Activated CD4-positive, alpha-beta T cell treated with anti-CD3 and anti-CD28 coated beads, Interleukin-2, amount 10 ng/mL, durations not matched to agents 24 days and 14 days (primary cell): ENCODE measurements at regions of chr1 and their contacts with region 1.

Region 1: DNA sequence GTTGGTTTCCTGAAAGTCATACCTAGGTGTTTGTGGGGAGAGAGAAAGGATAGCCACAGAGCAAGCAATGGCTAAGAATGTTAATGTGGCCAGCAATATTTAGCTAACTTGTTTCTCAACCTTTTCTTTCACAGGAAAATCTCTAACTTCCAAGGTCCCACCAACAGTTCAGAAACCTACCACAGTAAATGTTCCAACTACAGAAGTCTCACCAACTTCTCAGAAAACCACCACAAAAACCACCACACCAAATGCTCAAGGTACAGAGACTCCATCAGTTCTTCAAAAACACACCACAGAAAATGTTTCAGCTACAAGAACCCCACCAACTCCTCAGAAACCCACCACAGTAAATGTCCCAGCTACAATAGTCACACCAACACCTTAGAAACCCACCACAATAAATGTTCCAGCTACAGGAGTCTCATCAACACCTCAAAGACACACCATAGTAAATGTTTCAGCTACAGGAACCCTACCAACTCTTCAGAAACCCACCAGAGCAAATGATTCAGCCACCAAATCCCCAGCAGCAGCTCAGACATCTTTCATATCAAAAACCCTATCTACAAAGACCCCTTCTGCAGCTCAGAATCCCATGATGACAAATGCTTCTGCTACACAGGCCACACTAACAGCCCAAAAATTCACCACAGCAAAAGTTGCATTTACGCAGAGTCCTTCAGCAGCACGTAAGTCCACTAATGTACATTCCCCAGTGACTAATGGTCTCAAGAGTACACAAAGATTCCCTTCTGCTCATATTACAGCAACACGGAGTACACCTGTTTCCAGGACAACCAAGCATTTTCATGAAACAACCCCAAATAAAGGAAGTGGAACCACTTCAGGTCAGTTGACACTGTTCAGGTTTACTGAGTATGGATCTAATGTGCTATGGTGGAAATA is 15.3 kb downstream of the CD55 start:
- DNase-seq: peak; percentile 90
- H3K4me3 Mint-ChIP-seq: peak overlapping the region; percentile 71
- H3K27ac Mint-ChIP-seq: peak overlapping the region; percentile 95
- H3K4me1 Mint-ChIP-seq: peaks cover 65% of the 10 kb centered on the region
- H3K27me3 Mint-ChIP-seq: no peaks in the 10 kb centered on the region

Region 2: DNA sequence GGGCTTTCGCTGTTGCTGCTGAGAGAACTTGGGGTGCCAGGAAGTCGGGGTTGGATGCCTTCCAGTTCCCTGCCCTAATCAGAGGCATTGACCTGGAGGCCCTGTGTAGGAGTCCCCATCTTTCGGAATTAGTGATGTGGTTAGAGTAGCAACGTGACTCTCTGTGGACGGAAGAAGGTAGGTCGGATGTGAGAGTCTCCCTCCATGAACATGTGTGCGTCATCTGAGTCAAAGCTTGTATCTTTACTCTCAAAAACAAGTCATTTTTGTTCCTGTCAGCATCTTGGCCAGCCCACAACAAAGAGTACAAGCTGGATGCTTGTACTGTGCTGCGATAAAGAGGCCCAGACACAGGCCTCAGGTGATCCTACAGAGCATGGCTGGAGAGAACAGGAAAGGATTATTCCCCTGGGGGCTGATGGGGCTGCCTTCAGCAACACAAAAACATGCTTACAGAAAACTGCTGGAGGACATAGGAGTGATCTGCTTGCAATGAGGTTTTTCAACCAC is 533.5 kb before region 1 on chr1:
- intact Hi-C with region 1: loop called (anchors 1 kb)
- DNase-seq: peak; percentile 94
- H3K4me3 Mint-ChIP-seq: peak overlapping the region; percentile 55
- H3K27ac Mint-ChIP-seq: peak overlapping the region; percentile 87
- H3K4me1 Mint-ChIP-seq: peaks cover 77% of the 10 kb centered on the region
- H3K27me3 Mint-ChIP-seq: peaks cover 29% of the 10 kb centered on the region

Region 3: DNA sequence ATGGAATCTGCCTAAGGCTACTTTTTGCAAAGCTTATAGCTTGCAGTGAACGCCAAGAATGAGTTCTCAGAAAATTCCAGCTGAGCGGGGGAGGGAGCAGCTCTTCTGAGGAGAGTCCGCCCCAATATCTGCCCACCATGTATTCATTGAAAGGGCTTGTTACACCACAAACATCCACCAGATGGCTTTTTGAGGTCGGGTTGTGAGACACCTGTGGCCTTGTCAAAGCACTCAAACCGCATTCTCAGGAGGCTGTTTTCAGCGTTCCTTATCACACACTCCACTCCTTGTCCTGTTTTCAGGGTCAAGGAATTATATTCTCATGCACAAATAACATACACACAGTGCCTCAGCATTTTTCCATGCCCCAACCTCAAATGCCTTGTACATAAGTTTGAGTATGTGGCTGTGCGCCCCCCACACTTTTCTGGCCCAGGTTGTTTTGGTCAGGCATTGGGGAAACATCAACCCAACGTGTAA is 252.1 kb before region 1 on chr1:
- intact Hi-C with region 1: loop called (anchors 2 kb)
- DNase-seq: peak; percentile 89
- H3K4me3 Mint-ChIP-seq: no peak overlapping the region
- H3K27ac Mint-ChIP-seq: no peak overlapping the region
- H3K4me1 Mint-ChIP-seq: peaks cover 30% of the 10 kb centered on the region
- H3K27me3 Mint-ChIP-seq: peaks cover 24% of the 10 kb centered on the region

Region 4: DNA sequence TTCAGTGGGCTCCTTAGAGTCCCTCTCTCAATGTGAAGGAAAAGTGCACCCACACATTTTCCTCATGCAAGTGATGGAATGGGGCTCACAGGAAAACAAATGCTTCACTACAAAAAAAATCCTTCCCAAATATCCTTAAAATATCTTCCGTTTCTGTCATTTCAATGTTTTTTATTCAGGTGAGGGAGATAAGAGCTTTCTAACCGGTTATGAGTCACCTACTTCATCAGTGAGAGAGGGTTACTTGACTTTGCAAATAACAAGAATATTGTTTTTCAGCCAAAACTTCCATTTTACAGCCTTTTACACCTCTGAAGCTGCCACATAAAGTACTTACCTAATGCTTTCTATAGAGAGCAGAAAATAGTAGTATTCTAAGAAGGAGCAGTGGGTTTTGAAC is 113.7 kb before region 1 on chr1:
- intact Hi-C with region 1: no loop called
- DNase-seq: no peak
- H3K4me3 Mint-ChIP-seq: no peak overlapping the region
- H3K27ac Mint-ChIP-seq: no peak overlapping the region
- H3K4me1 Mint-ChIP-seq: peaks cover 3% of the 10 kb centered on the region
- H3K27me3 Mint-ChIP-seq: peaks cover 9% of the 10 kb centered on the region

Region 5: GRCh38 chr1:207241164-207241934 is 95.5 kb before region 1 on chr1:
- intact Hi-C with region 1: no loop called
- DNase-seq: no peak
- H3K4me3 Mint-ChIP-seq: no peak overlapping the region
- H3K27ac Mint-ChIP-seq: no peak overlapping the region
- H3K4me1 Mint-ChIP-seq: no peaks in the 10 kb centered on the region
- H3K27me3 Mint-ChIP-seq: peaks cover 19% of the 10 kb centered on the region

Region 6: GRCh38 chr1:207261971-207262370 is 74.8 kb before region 1 on chr1:
- intact Hi-C with region 1: no loop called
- DNase-seq: no peak
- H3K4me3 Mint-ChIP-seq: no peak overlapping the region
- H3K27ac Mint-ChIP-seq: no peak overlapping the region
- H3K4me1 Mint-ChIP-seq: no peaks in the 10 kb centered on the region
- H3K27me3 Mint-ChIP-seq: peaks cover 3% of the 10 kb centered on the region

Region 7: DNA sequence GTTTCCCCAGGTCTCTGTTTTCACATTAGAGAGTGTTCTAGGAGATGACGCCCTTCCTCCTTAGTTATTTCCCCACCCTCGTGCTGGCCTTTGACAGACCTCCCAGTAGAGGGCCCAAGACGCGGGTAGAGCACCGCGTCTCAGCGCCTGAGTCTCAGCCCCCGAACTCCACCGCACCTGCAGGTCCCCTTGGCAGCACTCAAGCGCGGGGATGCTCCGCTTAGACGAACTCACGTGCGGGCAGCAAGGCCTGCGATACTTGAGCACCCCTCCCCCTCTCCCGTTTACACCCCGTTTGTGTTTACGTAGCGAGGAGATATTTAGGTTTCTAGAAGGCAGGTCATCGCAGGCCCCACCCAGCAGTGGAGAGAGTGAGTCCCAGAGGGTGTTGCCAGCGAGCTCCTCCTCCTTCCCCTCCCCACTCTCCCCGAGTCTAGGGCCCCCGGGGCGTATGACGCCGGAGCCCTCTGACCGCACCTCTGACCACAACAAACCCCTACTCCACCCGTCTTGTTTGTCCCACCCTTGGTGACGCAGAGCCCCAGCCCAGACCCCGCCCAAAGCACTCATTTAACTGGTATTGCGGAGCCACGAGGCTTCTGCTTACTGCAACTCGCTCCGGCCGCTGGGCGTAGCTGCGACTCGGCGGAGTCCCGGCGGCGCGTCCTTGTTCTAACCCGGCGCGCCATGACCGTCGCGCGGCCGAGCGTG is 15.6 kb before region 1 on chr1 and contains the start of gene CD55:
- intact Hi-C with region 1: loop called (anchors 1 kb)
- DNase-seq: peak; percentile 100
- H3K4me3 Mint-ChIP-seq: peak within 1 kb of the TSS; percentile 98
- H3K27ac Mint-ChIP-seq: peak within 1 kb of the TSS; percentile 100
- H3K4me1 Mint-ChIP-seq: peaks cover 35% of the 10 kb centered on the region
- H3K27me3 Mint-ChIP-seq: peaks cover 3% of the 10 kb centered on the region
- total RNA-seq, gene CD55: 133 and 142 TPM in 2 replicates

Region 8: GRCh38 chr1:207389740-207390464 is 53.1 kb after region 1 on chr1:
- intact Hi-C with region 1: loop called (anchors 1 kb)
- DNase-seq: no peak
- H3K4me3 Mint-ChIP-seq: no peak overlapping the region
- H3K27ac Mint-ChIP-seq: peak overlapping the region; percentile 82
- H3K4me1 Mint-ChIP-seq: peaks cover 8% of the 10 kb centered on the region
- H3K27me3 Mint-ChIP-seq: no peaks in the 10 kb centered on the region

Region 9: GRCh38 chr1:207414606-207415108 is 77.8 kb after region 1 on chr1:
- intact Hi-C with region 1: loop called (anchors 1 kb)
- DNase-seq: peak; percentile 69
- H3K4me3 Mint-ChIP-seq: peak overlapping the region; percentile 12
- H3K27ac Mint-ChIP-seq: peak overlapping the region; percentile 45
- H3K4me1 Mint-ChIP-seq: peaks cover 26% of the 10 kb centered on the region
- H3K27me3 Mint-ChIP-seq: peaks cover 9% of the 10 kb centered on the region

Region 10: DNA sequence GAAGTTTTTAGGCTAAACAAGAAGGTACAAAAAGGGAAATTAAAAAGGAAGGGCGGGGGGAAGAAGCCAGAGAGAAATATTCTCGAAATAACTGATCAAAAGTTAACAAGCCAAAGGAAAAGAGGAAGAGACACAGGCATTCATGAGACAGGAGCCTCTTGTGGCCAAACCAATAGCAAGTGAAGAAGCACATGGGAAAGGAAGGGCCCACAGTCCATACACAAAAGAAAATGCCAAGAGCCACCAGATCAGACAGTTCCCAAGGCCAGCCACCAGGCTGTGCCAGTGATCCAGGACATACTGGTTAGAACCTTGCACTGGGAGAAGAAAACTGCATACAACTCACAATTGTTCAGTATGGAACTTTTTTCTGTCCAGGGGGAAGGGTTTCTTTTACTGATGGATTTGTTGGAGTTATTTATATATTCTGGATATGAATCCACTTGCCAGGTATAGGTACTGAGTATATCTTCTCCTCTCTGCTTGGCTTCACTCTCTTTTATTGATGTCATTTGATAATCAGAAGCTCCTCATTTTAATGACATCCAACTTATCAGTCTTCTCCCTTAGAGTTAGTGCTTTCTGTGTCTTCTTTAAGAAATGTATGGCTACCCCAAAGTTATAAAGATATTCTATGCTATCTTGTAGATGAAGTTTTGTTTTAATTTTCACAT is 491.8 kb after region 1 on chr1:
- intact Hi-C with region 1: loop called (anchors 1 kb)
- DNase-seq: peak; percentile 87
- H3K4me3 Mint-ChIP-seq: peak overlapping the region; percentile 5
- H3K27ac Mint-ChIP-seq: peak overlapping the region; percentile 74
- H3K4me1 Mint-ChIP-seq: peaks cover 84% of the 10 kb centered on the region
- H3K27me3 Mint-ChIP-seq: peaks cover 2% of the 10 kb centered on the region